ENCODE measurements at regions of chr5 and their contacts with region 1.

Region 1: GRCh38 chr5:54965806-54966205 is 19.6 kb downstream of the ESM1 start:
- DNase-seq: no peak
- H3K4me3 ChIP-seq: no peak overlapping the region
- H3K27ac ChIP-seq: no peak overlapping the region
- H3K4me1 ChIP-seq: no peaks in the 10 kb centered on the region
- H3K27me3 ChIP-seq: no peaks in the 10 kb centered on the region
- CTCF ChIP-seq: no peak

Region 2: GRCh38 chr5:54727874-54728587 is 237.8 kb before region 1 on chr5:
- CTCF ChIA-PET with region 1: no interaction called
- dilution Hi-C with region 1: no loop called
- in situ Hi-C with region 1: no loop called
- intact Hi-C with region 1: no loop called
- DNase-seq: no peak
- H3K4me3 ChIP-seq: no peak overlapping the region
- H3K27ac ChIP-seq: no peak overlapping the region
- H3K4me1 ChIP-seq: peaks cover 3% of the 10 kb centered on the region
- H3K27me3 ChIP-seq: no peaks in the 10 kb centered on the region
- CTCF ChIP-seq: no peak

Region 3: GRCh38 chr5:54924487-54924886 is 41.3 kb before region 1 on chr5:
- CTCF ChIA-PET with region 1: no interaction called
- dilution Hi-C with region 1: no loop called
- in situ Hi-C with region 1: no loop called
- intact Hi-C with region 1: loop called (anchors 1 kb)
- DNase-seq: no peak
- H3K4me3 ChIP-seq: no peak overlapping the region
- H3K27ac ChIP-seq: no peak overlapping the region
- H3K4me1 ChIP-seq: no peaks in the 10 kb centered on the region
- H3K27me3 ChIP-seq: peaks cover 4% of the 10 kb centered on the region
- CTCF ChIP-seq: no peak

Measured in mammary epithelial cell (primary cell).